ENCODE measurements at regions of chr9 and their contacts with region 1.

Region 1: DNA sequence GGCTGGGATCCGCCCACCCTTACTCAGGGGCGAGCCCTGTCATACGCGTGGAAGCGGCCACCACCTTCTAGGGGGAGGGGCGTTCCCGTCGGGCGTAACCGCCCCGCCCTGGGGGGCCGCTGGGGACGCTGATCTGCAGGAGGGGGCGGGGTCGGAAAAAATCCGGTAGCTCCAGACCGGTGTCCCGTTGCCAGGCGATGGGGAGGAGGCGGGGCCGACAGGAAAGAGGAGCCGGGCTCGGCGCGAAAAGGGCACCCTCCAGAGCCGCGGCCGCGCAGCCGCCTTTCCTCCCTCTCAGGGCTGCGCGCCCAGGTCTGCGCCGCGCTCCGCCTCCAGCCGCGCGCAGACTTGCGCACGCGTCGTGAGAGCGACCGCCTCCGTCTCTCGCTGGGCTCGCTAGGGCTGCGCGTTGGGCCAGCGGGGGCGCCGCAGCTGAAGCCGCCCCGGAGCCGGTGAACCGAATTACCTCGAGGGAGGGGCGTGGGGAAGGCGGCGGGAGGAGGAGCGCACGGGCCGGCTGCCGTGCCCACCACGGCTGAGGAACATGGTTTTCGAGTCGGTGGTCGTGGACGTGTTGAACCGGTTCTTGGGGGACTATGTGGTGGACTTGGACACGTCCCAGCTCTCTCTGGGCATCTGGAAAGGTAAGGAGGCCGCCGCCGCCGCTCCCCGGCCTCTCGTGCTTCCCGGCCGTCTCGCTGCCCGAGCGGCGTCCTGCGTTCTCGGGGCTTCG is at the start of gene VPS13A:
- DNase-seq: peak; percentile 92 to 95
- ATAC-seq: peak; percentile 93 to 98 (median 94)
- H3K4me3 ChIP-seq: peak within 1 kb of the TSS; percentile 86
- H3K27ac ChIP-seq: peak within 1 kb of the TSS; percentile 93
- H3K4me1 ChIP-seq: peaks cover 49% of the 10 kb centered on the region
- H3K27me3 ChIP-seq: no peaks in the 10 kb centered on the region
- CTCF ChIP-seq: peak; percentile 29
- total RNA-seq, gene VPS13A: 19.4 to 27.0 (median 20.7) TPM

Region 2: DNA sequence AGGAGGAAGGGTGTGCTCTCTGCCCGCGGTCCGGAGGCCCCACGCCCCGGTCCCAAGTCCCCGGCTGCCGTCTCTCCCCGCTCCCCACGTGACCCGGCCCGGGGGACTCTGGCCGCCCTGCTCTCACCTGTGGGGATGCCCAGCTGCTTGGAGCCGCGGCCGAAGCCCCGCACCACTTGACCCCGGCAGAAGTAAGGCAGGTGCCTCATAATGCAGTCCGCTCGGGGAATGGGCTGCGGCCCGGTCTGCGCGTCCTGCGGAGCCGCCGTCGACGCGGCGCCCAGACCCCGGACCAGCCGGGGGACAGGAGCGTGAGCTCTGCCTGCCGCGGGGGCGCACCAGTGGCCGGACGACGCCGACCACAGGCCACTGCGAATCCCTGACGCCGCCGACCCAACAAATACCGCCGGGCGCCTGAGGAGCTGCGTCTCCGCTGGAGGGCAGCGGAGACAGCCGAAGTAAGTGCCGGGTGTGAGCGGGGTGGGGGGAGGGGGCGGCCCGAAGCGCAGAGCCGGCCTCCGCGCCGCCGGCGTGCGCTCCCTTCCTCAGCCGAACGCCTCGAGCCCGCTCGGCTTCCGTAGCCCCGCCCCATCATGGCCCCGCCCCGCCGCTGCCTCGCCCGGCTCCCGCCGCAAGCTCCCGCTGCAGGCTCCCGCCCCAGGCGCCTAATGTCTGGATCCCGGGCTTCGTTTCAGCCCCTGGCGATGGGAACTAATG is 783.2 kb before region 1 on chr9 and contains the start of gene RFK:
- intact Hi-C with region 1: loop called in 1 of 2 experiments (anchors 10 kb)
- DNase-seq: peak; percentile 95 to 96
- ATAC-seq: peak; percentile 97 to 99 (median 98)
- H3K4me3 ChIP-seq: peak within 1 kb of the TSS; percentile 94
- H3K27ac ChIP-seq: peak within 1 kb of the TSS; percentile 90
- H3K4me1 ChIP-seq: peaks cover 4% of the 10 kb centered on the region
- H3K27me3 ChIP-seq: no peaks in the 10 kb centered on the region
- CTCF ChIP-seq: peak; percentile 36
- total RNA-seq, gene RFK: 12.4 to 18.1 (median 15.1) TPM

Region 3: GRCh38 chr9:77384406-77384805 is 207.1 kb after region 1 on chr9:
- intact Hi-C with region 1: no loop called
- DNase-seq: no peak
- ATAC-seq: no peak
- H3K4me3 ChIP-seq: no peak overlapping the region
- H3K27ac ChIP-seq: no peak overlapping the region
- H3K4me1 ChIP-seq: no peaks in the 10 kb centered on the region
- H3K27me3 ChIP-seq: no peaks in the 10 kb centered on the region
- CTCF ChIP-seq: no peak